ENCODE measurements at regions of chr13 and their contacts with region 1.

Region 1: GRCh38 chr13:39433651-39434050 is 169.3 kb downstream of the LHFPL6 start:
- DNase-seq: no peak

Region 2: GRCh38 chr13:39484506-39485313 is 51.1 kb after region 1 on chr13:
- intact Hi-C with region 1: loop called in 1 of 2 experiments (anchors 1 kb)
- DNase-seq: no peak